ENCODE measurements at regions of chr10 and their contacts with region 1.

Region 1: GRCh38 chr10:71727738-71728737 is 8.5 kb upstream of the C10orf105 start:
- DNase-seq: peak; percentile 24
- H3K4me3 Mint-ChIP-seq: no peak overlapping the region
- H3K27ac Mint-ChIP-seq: no peak overlapping the region
- H3K4me1 Mint-ChIP-seq: peaks cover 26% of the 10 kb centered on the region
- H3K27me3 Mint-ChIP-seq: peaks cover under 1% of the 10 kb centered on the region
- CTCF ChIP-seq: no peak

Region 2: GRCh38 chr10:71766702-71767419 is 38.8 kb after region 1 on chr10:
- CTCF ChIA-PET with region 1: interaction called, 10 read pairs
- intact Hi-C with region 1: loop called (anchors 2 kb)
- DNase-seq: peak; percentile 90
- H3K4me3 Mint-ChIP-seq: peak overlapping the region; percentile 65
- H3K27ac Mint-ChIP-seq: peak overlapping the region; percentile 87
- H3K4me1 Mint-ChIP-seq: peaks cover 61% of the 10 kb centered on the region
- H3K27me3 Mint-ChIP-seq: no peaks in the 10 kb centered on the region
- CTCF ChIP-seq: no peak

Region 3: GRCh38 chr10:71771821-71772617 is 44.0 kb after region 1 on chr10:
- CTCF ChIA-PET with region 1: interaction called, 16 read pairs
- intact Hi-C with region 1: loop called (anchors 2 kb)
- DNase-seq: peak; percentile 60
- H3K4me3 Mint-ChIP-seq: peak overlapping the region; percentile 87
- H3K27ac Mint-ChIP-seq: no peak overlapping the region
- H3K4me1 Mint-ChIP-seq: peaks cover 47% of the 10 kb centered on the region
- H3K27me3 Mint-ChIP-seq: no peaks in the 10 kb centered on the region
- CTCF ChIP-seq: no peak